WTC11 (cell line): ENCODE measurements at regions of chr7 and their contacts with region 1.

Region 1: GRCh38 chr7:137626469-137627067 is 220.2 kb downstream of the DGKI start:
- DNase-seq: peak; percentile 75
- ATAC-seq: peak; percentile 93
- H3K4me3 Mint-ChIP-seq: no peak overlapping the region
- H3K27ac Mint-ChIP-seq: no peak overlapping the region
- H3K4me1 Mint-ChIP-seq: no peaks in the 10 kb centered on the region
- H3K27me3 Mint-ChIP-seq: no peaks in the 10 kb centered on the region; the same call in 1 of the 2 replicates
- CTCF ChIP-seq: peak; percentile 81

Region 2: GRCh38 chr7:137462074-137462715 is 164.4 kb before region 1 on chr7:
- CTCF ChIA-PET with region 1: no interaction called
- POLR2A ChIA-PET with region 1: no interaction called
- DNase-seq: no peak
- ATAC-seq: no peak
- H3K4me3 Mint-ChIP-seq: no peak overlapping the region
- H3K27ac Mint-ChIP-seq: no peak overlapping the region
- H3K4me1 Mint-ChIP-seq: no peaks in the 10 kb centered on the region
- H3K27me3 Mint-ChIP-seq: no peaks in the 10 kb centered on the region
- CTCF ChIP-seq: no peak

Region 3: DNA sequence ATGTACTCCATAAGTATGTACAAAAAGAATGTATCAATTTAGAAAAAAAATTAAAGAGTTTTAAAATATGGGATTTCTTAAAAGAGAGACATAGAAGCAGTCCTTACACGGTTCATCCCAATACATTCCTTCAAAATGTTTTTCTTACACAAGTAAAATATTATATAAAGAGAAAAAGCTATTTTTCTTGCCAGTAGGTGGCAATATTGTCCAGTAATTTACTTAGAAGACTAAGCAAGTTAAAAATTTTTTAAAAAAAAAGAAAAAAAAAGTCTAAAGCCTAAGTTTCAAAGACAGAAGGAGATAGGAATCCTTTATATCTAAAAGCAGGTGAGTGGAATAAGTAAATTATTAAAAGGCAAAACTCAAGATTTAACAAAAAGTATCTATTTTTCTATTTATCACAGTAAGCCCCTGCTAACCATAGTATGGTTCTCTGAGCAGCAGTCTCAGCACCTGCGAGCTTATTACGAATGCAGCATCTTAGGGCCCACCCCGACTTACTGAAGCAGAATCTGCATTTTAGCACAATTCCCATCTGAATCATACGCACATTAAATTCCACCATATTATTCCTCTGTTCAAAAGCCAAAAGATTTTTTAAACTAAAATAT is 20.4 kb before region 1 on chr7:
- CTCF ChIA-PET with region 1: interaction called, 28 read pairs
- POLR2A ChIA-PET with region 1: no interaction called
- DNase-seq: no peak
- ATAC-seq: no peak
- H3K4me3 Mint-ChIP-seq: no peak overlapping the region
- H3K27ac Mint-ChIP-seq: no peak overlapping the region
- H3K4me1 Mint-ChIP-seq: no peaks in the 10 kb centered on the region
- H3K27me3 Mint-ChIP-seq: no peaks in the 10 kb centered on the region; the same call in 1 of the 2 replicates
- CTCF ChIP-seq: peak; percentile 27

Region 4: GRCh38 chr7:137613006-137613405 is 13.6 kb before region 1 on chr7:
- CTCF ChIA-PET with region 1: interaction called, 25 read pairs
- POLR2A ChIA-PET with region 1: no interaction called
- DNase-seq: no peak
- ATAC-seq: peak; percentile 34; the same call in 1 of the 2 replicates
- H3K4me3 Mint-ChIP-seq: no peak overlapping the region
- H3K27ac Mint-ChIP-seq: no peak overlapping the region
- H3K4me1 Mint-ChIP-seq: peaks cover 18% of the 10 kb centered on the region
- H3K27me3 Mint-ChIP-seq: no peaks in the 10 kb centered on the region
- CTCF ChIP-seq: no peak

Region 5: GRCh38 chr7:137656227-137656849 is 29.8 kb after region 1 on chr7:
- CTCF ChIA-PET with region 1: interaction called, 10 read pairs
- POLR2A ChIA-PET with region 1: no interaction called
- DNase-seq: peak; percentile 79
- ATAC-seq: peak; percentile 65
- H3K4me3 Mint-ChIP-seq: no peak overlapping the region
- H3K27ac Mint-ChIP-seq: no peak overlapping the region
- H3K4me1 Mint-ChIP-seq: peaks cover 40% of the 10 kb centered on the region
- H3K27me3 Mint-ChIP-seq: no peaks in the 10 kb centered on the region
- CTCF ChIP-seq: peak; percentile 92

Region 6: GRCh38 chr7:137695942-137696341 is 69.4 kb after region 1 on chr7:
- CTCF ChIA-PET with region 1: no interaction called
- POLR2A ChIA-PET with region 1: no interaction called
- DNase-seq: no peak
- ATAC-seq: no peak
- H3K4me3 Mint-ChIP-seq: no peak overlapping the region
- H3K27ac Mint-ChIP-seq: no peak overlapping the region
- H3K4me1 Mint-ChIP-seq: no peaks in the 10 kb centered on the region
- H3K27me3 Mint-ChIP-seq: no peaks in the 10 kb centered on the region
- CTCF ChIP-seq: no peak